ENCODE measurements at regions of chr20 and their contacts with region 1.

Region 1: DNA sequence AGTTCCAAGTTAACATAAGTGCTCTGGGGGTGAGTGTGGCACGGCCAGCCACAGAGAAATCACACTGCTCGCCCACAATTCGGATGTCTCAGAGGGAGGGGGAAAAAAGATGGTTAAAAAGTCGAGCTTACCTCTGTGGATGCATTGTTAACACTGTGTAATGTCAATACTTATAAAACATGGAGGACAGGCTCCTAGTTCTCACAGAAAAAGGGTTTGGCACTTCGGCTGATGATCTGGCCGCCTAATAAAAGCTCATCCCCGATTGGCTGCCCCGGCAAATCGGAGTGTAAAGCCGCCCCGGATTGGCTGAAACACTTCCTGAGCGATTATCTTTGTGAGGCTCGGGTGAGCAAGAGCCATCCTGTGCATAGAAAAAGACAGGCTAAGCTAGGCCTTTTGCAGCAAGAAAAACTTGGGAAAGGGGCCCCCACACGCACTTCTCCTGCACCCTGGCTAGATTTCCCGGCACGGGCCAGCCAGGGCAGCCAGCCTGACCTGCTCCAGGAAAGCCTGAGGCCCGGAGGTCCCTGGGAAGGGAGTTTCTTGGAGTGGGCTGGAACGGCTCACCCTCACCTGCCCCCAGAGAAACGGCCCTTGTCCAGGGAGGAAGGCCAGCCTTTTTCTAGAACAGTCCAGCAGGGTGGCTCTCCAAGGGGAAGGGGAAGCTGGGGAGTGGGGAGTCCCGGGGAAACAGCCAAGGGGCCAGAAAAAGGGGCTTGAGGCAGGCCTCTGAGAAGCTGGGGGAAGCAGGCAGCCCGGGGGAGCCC is at the start of gene ZMYND8:
- DNase-seq: peak; percentile 94
- ATAC-seq: peak; percentile 85
- H3K4me3 Mint-ChIP-seq: peak within 1 kb of the TSS; percentile 77
- H3K27ac Mint-ChIP-seq: peak within 1 kb of the TSS; percentile 98
- H3K4me1 Mint-ChIP-seq: peaks cover 54% of the 10 kb centered on the region
- H3K27me3 Mint-ChIP-seq: no peaks in the 10 kb centered on the region
- total RNA-seq, gene ZMYND8: 33.7 to 50.3 TPM

Region 2: DNA sequence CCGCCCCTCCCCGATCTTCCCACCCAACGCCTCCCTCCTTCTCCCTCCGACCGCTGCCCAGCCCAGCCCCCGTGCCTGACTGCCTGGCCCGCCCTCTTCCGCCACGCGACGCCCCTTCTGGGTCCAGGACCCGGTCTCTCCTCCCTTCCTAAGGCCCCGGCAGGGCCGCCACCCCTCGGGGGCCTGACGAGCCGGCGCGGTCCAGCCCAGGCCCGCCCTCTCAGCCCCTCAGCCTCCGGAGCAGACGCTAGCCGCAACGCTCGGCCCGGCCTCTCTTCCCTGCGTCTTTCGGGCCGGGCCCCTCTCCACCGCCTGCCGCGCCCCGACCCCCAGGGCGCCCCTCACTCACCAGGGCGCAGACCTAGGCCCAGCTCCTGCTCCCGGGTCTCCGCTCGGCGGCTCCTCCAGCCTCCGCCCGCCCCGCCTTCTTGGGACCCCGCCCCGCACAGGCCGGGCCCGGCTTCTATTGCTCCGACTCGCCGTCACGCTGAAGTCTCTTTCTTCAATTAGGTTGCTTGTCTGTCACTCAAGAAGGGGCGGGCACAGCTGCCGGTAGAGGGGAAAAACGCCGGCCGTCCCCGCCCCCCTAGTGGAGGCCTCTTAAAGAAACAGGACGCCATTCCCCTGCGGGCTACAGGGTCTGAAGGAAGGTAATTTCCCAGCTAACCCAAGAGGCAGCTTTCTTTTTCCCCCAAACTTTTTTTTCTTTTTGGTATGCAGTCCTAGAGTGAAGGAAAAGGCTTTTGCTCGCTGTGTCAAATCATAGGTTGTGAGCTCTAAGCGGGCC is 950.3 kb before region 1 on chr20 and contains the start of gene ELMO2:
- CTCF ChIA-PET with region 1: no interaction called
- POLR2A ChIA-PET with region 1: no interaction called
- intact Hi-C with region 1: loop called in 1 of 2 experiments (anchors 2 kb)
- DNase-seq: peak; percentile 98
- ATAC-seq: peak; percentile 85
- H3K4me3 Mint-ChIP-seq: peak within 1 kb of the TSS; percentile 88
- H3K27ac Mint-ChIP-seq: peak within 1 kb of the TSS; percentile 85
- H3K4me1 Mint-ChIP-seq: peaks cover 65% of the 10 kb centered on the region
- H3K27me3 Mint-ChIP-seq: no peaks in the 10 kb centered on the region
- total RNA-seq, gene ELMO2: 47.4 to 54.6 TPM

Region 3: DNA sequence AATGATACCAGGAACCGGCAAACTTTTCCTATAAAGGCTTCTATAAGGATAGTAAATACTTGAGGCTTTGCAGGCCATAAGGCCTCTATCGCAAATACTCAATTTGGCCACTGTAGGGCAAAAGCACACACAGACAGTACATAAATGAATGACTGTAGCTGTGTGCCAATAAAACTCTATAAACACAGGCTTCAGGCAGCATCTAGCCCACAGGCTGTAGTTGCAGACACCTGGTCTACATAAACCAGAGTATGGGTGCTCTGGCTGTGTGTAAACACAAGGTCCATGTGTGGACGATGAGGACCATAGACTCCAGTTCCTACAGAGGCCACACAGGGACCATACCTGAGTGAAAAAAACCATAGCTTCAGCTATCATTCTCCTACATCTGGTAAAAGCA is 52.4 kb before region 1 on chr20:
- CTCF ChIA-PET with region 1: no interaction called
- POLR2A ChIA-PET with region 1: no interaction called
- intact Hi-C with region 1: no loop called
- DNase-seq: no peak
- ATAC-seq: no peak
- H3K4me3 Mint-ChIP-seq: no peak overlapping the region
- H3K27ac Mint-ChIP-seq: no peak overlapping the region
- H3K4me1 Mint-ChIP-seq: peaks cover 20% of the 10 kb centered on the region
- H3K27me3 Mint-ChIP-seq: no peaks in the 10 kb centered on the region

Region 4: GRCh38 chr20:47317127-47317895 is 39.4 kb before region 1 on chr20:
- CTCF ChIA-PET with region 1: interaction called, 3 read pairs
- POLR2A ChIA-PET with region 1: interaction called, 6 read pairs
- intact Hi-C with region 1: loop called (anchors 2 kb)
- DNase-seq: peak; percentile 81
- ATAC-seq: peak; percentile 84
- H3K4me3 Mint-ChIP-seq: no peak overlapping the region
- H3K27ac Mint-ChIP-seq: peak overlapping the region; percentile 90
- H3K4me1 Mint-ChIP-seq: peaks cover 61% of the 10 kb centered on the region
- H3K27me3 Mint-ChIP-seq: no peaks in the 10 kb centered on the region

Region 5: GRCh38 chr20:47487175-47487917 is 130.6 kb after region 1 on chr20:
- CTCF ChIA-PET with region 1: no interaction called
- POLR2A ChIA-PET with region 1: no interaction called
- intact Hi-C with region 1: loop called in 1 of 2 experiments (anchors 2 kb)
- DNase-seq: peak; percentile 78
- ATAC-seq: peak; percentile 88
- H3K4me3 Mint-ChIP-seq: peak overlapping the region; percentile 26
- H3K27ac Mint-ChIP-seq: peak overlapping the region; percentile 99
- H3K4me1 Mint-ChIP-seq: peaks cover 80% of the 10 kb centered on the region
- H3K27me3 Mint-ChIP-seq: no peaks in the 10 kb centered on the region

Region 6: DNA sequence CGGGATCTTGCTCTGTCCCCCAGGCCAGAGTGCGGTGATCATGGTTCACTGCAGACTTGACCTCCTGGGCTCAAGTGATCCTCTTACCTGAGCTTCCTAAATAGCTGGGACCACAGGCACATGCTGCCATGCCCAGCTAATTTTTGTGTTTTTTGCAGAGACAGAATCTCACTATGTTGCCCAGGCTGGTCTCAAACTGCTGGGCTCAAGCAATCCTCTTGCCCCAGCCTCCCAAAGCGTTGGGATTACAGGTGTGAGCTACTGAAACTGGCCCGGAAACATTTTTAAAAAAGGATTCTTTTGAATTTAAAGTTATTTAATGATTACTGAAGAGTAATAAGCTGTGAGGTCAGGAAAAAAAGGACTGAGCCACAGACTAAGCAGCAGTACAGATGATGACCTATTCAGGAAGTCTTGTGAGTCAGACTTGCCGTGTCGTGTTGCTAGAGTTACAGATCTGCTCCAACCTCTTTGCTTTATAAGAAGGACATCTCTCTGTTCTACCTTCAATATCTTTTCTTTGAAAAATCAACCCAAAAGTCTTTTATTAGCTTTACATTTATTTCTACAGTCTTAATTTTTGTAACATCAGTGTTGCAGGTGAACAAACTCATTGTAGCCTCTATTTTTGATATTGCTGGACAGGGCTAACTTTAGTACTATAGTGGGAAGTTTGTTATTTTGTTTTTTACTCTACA is 253.7 kb after region 1 on chr20:
- CTCF ChIA-PET with region 1: no interaction called
- POLR2A ChIA-PET with region 1: no interaction called
- intact Hi-C with region 1: loop called in 1 of 2 experiments (anchors 5 kb)
- DNase-seq: peak; percentile 93
- ATAC-seq: peak; percentile 90
- H3K4me3 Mint-ChIP-seq: peak overlapping the region; percentile 46
- H3K27ac Mint-ChIP-seq: peak overlapping the region; percentile 90
- H3K4me1 Mint-ChIP-seq: peaks cover 82% of the 10 kb centered on the region
- H3K27me3 Mint-ChIP-seq: no peaks in the 10 kb centered on the region

Region 7: GRCh38 chr20:47725248-47725973 is 368.7 kb after region 1 on chr20:
- CTCF ChIA-PET with region 1: no interaction called
- POLR2A ChIA-PET with region 1: no interaction called
- intact Hi-C with region 1: loop called in 1 of 2 experiments (anchors 5 kb)
- DNase-seq: peak; percentile 90
- ATAC-seq: peak; percentile 72
- H3K4me3 Mint-ChIP-seq: no peak overlapping the region
- H3K27ac Mint-ChIP-seq: peak overlapping the region; percentile 63
- H3K4me1 Mint-ChIP-seq: peaks cover 29% of the 10 kb centered on the region
- H3K27me3 Mint-ChIP-seq: no peaks in the 10 kb centered on the region